PC-9 (cell line): ENCODE measurements at regions of chr19 and their contacts with region 1.

Region 1: GRCh38 chr19:54231077-54231931 is 8.5 kb upstream of the LILRB3 start:
- DNase-seq: peak; percentile 61 to 84
- H3K4me3 ChIP-seq: no peak overlapping the region
- H3K27ac ChIP-seq: no peak overlapping the region
- H3K4me1 ChIP-seq: no peaks in the 10 kb centered on the region
- H3K27me3 ChIP-seq: peaks cover 49% of the 10 kb centered on the region
- CTCF ChIP-seq: peak; percentile 92

Region 2: GRCh38 chr19:53772943-53773342 is 458.4 kb before region 1 on chr19:
- CTCF ChIA-PET with region 1: no interaction called
- POLR2A ChIA-PET with region 1: no interaction called
- intact Hi-C with region 1: loop called (anchors 5 kb)
- DNase-seq: peak; percentile 56 to 62
- H3K4me3 ChIP-seq: no peak overlapping the region
- H3K27ac ChIP-seq: no peak overlapping the region
- H3K4me1 ChIP-seq: peaks cover 14% of the 10 kb centered on the region
- H3K27me3 ChIP-seq: no peaks in the 10 kb centered on the region
- CTCF ChIP-seq: peak; percentile 92

Region 3: GRCh38 chr19:54168174-54168917 is 63.0 kb before region 1 on chr19:
- CTCF ChIA-PET with region 1: interaction called, 10 read pairs
- POLR2A ChIA-PET with region 1: no interaction called
- intact Hi-C with region 1: loop called (anchors 1 kb)
- DNase-seq: peak; percentile 69 to 91
- H3K4me3 ChIP-seq: no peak overlapping the region
- H3K27ac ChIP-seq: no peak overlapping the region
- H3K4me1 ChIP-seq: peaks cover 9% of the 10 kb centered on the region; the same call in 1 of the 2 replicates
- H3K27me3 ChIP-seq: no peaks in the 10 kb centered on the region
- CTCF ChIP-seq: peak; percentile 83

Region 4: DNA sequence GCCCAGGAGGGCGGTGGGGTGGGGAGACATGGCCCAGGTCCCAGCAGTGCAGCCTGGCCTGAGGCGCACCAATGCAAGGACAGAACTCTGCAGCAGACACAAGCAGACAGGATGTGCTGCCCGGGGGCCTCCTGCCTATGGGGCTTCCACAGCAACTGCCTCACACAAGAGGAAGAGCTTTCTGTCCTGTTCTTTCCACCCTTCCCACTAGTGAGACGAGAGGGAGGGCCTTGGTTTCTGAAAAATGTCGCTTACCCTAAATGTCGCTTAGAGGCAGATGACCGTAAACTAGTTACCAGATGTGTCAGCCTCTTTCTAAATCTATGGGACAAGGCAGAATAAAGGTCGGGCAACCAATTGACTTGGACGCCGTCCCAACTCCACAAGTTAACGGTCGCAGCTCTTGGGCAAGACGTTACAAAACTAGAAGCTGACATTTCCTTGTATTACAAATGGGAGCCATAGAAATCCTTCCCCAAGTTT is 133.5 kb after region 1 on chr19 and contains the start of gene LAIR1:
- CTCF ChIA-PET with region 1: no interaction called
- POLR2A ChIA-PET with region 1: no interaction called
- intact Hi-C with region 1: no loop called
- DNase-seq: no peak
- H3K4me3 ChIP-seq: no peak within 1 kb of the TSS
- H3K27ac ChIP-seq: no peak within 1 kb of the TSS
- H3K4me1 ChIP-seq: no peaks in the 10 kb centered on the region
- H3K27me3 ChIP-seq: peaks cover 74% of the 10 kb centered on the region
- CTCF ChIP-seq: no peak
- total RNA-seq, gene LAIR1: not detected in 2 replicates